ENCODE measurements at regions of chr19 and their contacts with region 1.

Region 1: GRCh38 chr19:33684536-33685232 is 62.9 kb downstream of the CHST8 start:
- DNase-seq: peak; percentile 76
- H3K4me3 ChIP-seq: no peak overlapping the region
- H3K27ac ChIP-seq: peak overlapping the region in 1 of 2 experiments; percentile 4; a peak in 1 of 4 replicates
- H3K4me1 ChIP-seq: peaks cover 0 to 51% of the 10 kb centered on the region in 2 experiments; a peak in 2 of 4 replicates
- H3K27me3 ChIP-seq: no peaks in the 10 kb centered on the region
- CTCF ChIP-seq: no peak
- EP300 ChIP-seq: no peak
- RAD21 ChIP-seq: no peak

Region 2: DNA sequence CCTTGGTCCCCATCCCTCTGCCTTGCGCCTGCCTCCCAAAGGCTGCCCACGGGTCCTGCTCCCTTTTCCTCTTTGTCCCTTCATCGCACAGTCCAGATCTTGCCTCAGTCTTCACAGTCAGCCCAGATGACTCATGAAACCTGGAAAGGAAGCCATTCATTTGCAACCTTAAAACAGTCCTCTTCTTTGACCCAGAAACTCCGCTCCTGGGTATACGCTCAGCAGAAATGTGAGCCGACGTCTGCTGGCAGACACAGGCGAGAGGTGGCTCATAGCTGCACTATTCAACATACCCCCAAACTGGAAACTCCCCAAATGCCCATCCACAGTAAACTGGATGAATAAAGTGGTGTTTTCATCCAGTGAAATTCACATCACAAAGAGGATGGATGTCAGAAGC is 149.5 kb before region 1 on chr19:
- CTCF ChIA-PET with region 1: no interaction called
- POLR2A ChIA-PET with region 1: no interaction called
- DNase-seq: no peak
- H3K4me3 ChIP-seq: no peak overlapping the region
- H3K27ac ChIP-seq: no peak overlapping the region
- H3K4me1 ChIP-seq: no peaks in the 10 kb centered on the region
- H3K27me3 ChIP-seq: no peaks in the 10 kb centered on the region
- CTCF ChIP-seq: no peak
- EP300 ChIP-seq: no peak
- RAD21 ChIP-seq: no peak

Region 3: GRCh38 chr19:33698664-33699435 is 14.2 kb after region 1 on chr19:
- CTCF ChIA-PET with region 1: interaction called, 11 read pairs
- POLR2A ChIA-PET with region 1: no interaction called
- DNase-seq: peak; percentile 46
- H3K4me3 ChIP-seq: no peak overlapping the region
- H3K27ac ChIP-seq: no peak overlapping the region
- H3K4me1 ChIP-seq: peaks cover 0 to 39% of the 10 kb centered on the region in 2 experiments; a peak in 1 of 4 replicates
- H3K27me3 ChIP-seq: no peaks in the 10 kb centered on the region
- CTCF ChIP-seq: no peak
- EP300 ChIP-seq: no peak
- RAD21 ChIP-seq: no peak

Measured in SK-N-SH (cell line).